WTC11 (cell line): ENCODE measurements at regions of chr11 and their contacts with region 1.

Region 1: DNA sequence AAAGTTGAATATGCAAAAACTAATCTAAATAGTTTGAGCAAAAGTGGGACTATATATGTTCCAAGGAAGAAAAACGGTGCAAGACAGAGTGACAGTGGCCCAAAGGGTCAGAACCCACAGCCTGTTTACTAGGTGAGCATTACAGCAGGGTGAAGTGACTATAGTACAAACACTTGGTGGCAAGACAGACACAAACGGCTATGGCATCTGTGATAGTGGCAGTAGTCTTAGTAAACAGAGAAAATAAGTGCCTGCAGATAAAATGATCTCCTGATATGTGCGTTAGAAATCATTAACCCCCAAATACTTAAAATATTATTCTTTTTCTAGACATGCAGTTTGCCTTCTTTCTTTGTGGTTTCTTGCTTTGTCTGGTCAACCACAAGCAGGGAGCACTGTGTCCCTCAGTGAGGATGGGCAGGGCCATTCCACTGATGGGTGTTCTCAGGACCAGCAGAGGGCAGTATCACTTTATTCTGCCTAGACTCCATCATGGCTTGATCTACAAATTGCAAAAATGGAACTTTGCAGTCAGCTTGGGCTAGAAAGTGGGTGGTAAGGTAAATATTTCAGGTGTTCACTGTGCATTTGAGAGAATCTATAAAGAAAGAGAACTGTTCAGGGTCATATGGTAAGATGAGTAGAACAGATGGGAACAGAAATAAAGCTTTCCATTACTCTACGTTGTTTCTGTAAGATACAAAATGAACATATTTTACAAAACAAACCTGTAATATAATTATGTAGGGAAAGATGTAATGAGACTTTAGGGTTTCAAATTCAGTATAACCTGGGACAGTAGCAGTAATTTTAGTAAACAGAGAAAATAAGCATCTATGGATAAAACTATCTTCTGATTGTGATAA is 198.2 kb downstream of the SWAP70 start:
- DNase-seq: peak; percentile 60
- ATAC-seq: peak; percentile 87
- H3K4me3 Mint-ChIP-seq: no peak overlapping the region
- H3K27ac Mint-ChIP-seq: no peak overlapping the region
- H3K4me1 Mint-ChIP-seq: peaks cover 47% of the 10 kb centered on the region
- H3K27me3 Mint-ChIP-seq: no peaks in the 10 kb centered on the region
- CTCF ChIP-seq: peak; percentile 74

Region 2: DNA sequence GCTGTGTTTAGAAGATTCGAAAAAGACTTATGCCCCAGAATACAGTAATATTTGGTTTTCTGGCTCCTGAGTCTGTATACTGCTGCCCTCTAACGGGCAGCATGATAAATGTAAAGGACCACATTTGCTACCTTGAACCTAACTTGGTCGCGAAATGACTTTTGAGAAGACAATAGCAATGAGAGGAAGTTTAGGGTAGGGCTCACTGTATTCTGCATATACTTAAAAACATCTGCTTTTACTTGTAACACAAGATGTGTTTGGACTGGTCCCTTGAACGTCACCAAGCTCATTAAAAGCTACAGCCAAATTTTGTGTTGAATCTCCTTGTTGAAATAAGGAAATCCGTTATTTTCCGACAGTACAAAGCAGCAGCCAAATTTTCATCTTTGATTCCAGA is 110.9 kb after region 1 on chr11:
- CTCF ChIA-PET with region 1: interaction called, 12 read pairs
- POLR2A ChIA-PET with region 1: interaction called, 3 read pairs
- DNase-seq: no peak
- ATAC-seq: peak; percentile 71
- H3K4me3 Mint-ChIP-seq: no peak overlapping the region
- H3K27ac Mint-ChIP-seq: no peak overlapping the region
- H3K4me1 Mint-ChIP-seq: peaks cover 28% of the 10 kb centered on the region
- H3K27me3 Mint-ChIP-seq: no peaks in the 10 kb centered on the region
- CTCF ChIP-seq: peak; percentile 40